Naive thymus-derived CD8-positive, alpha-beta T cell (primary cell): ENCODE measurements at regions of chr7 and their contacts with region 1.

Region 1: DNA sequence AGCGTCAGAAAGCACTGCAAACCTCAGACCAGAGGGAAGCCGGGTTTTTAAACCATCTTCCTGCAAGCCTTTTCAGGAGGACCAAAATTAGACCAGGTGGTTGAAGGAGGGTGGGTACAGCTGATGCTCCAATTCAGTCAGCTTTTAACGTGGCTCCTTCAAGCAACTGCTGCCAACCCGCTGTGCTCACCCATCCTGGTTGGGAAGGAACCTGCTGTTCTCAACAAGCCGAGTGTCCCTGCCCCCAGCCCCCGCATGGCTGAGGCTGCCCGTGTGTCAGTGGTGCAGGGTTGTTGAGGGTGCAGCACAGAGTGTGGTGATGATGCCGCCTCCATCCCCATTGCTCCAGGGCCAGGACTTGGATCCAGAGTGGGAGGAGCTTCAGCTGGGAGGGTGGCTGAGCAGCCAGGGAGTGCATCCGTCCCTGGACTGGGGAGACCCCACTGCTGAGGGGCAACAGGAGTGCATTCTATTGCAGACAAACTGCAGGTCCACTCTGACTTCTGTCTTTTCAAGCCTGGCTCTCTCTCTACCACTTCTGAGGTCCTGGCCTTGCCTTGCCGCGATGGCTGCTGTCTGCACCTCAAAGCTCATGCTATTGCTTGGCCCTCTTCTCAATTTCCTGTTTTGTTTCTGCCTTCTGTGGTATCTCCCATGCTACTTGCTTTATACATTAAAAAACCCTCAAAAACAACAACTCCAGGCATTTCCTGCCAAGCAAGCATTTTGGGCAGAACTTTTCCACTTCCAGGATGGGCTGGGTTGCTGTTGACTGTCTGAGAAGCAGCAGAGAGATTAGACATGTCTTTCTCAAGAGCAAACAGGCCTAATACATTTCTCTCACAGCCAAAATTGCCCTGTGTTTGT is 134.7 kb downstream of the DNAJB6 start:
- DNase-seq: peak in 8 of 10 donors; percentile 27 to 73 (median 48)
- ATAC-seq: peak; percentile 79 to 83
- H3K4me3 Mint-ChIP-seq: peak overlapping the region; percentile 33 to 87 (median 71)
- H3K27ac Mint-ChIP-seq: peak overlapping the region; percentile 26 to 98 (median 93)
- H3K4me1 Mint-ChIP-seq: peaks cover 15 to 48% (median 39%) of the 10 kb centered on the region in 4 donors
- H3K27me3 Mint-ChIP-seq: no peaks in the 10 kb centered on the region

Region 2: DNA sequence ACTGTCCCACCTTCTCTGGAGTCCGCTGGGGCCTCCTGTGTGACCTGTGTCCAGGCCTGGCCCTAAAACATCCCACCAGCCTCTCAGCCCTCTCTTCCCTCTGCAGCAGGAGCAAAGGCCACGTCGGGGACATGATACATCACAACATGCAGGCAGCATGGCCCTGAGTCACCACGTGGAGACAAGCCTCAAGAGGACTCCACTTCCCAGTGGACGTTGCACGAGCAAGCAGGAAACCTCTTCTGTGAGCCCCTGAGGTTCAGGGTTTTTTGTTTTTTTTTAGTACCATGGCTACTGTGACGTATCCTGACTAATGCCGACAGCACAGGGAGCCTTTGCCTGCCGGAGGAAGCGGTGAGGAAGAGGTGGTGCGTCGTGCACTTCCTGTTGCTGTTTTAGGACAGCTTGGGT is 31.2 kb after region 1 on chr7:
- POLR2A ChIA-PET with region 1: interaction called, 31 read pairs
- DNase-seq: peak; percentile 35 to 94 (median 79)
- ATAC-seq: peak; percentile 95 to 96
- H3K4me3 Mint-ChIP-seq: peak overlapping the region; percentile 76 to 90 (median 86)
- H3K27ac Mint-ChIP-seq: peak overlapping the region; percentile 86 to 99 (median 97)
- H3K4me1 Mint-ChIP-seq: peaks cover 10 to 28% (median 27%) of the 10 kb centered on the region in 4 donors
- H3K27me3 Mint-ChIP-seq: peaks cover 2 to 14% (median 8%) of the 10 kb centered on the region in 5 donors

Region 3: GRCh38 chr7:157612664-157613561 is 141.4 kb after region 1 on chr7:
- POLR2A ChIA-PET with region 1: interaction called, 12 read pairs
- DNase-seq: peak; percentile 38 to 84 (median 72)
- ATAC-seq: peak; percentile 81 to 85
- H3K4me3 Mint-ChIP-seq: peak overlapping the region; percentile 80 to 91 (median 88)
- H3K27ac Mint-ChIP-seq: peak overlapping the region; percentile 65 to 96 (median 90)
- H3K4me1 Mint-ChIP-seq: peaks cover 12 to 34% (median 19%) of the 10 kb centered on the region in 4 donors
- H3K27me3 Mint-ChIP-seq: no peaks in the 10 kb centered on the region